ENCODE measurements at regions of chr3 and their contacts with region 1.

Region 1: GRCh38 chr3:107619549-107619948 is 96.8 kb downstream of the BBX start:
- DNase-seq: no peak
- ATAC-seq: no peak
- H3K4me3 Mint-ChIP-seq: no peak overlapping the region
- H3K27ac Mint-ChIP-seq: peak overlapping the region; percentile 5
- H3K4me1 Mint-ChIP-seq: peaks cover 59% of the 10 kb centered on the region
- H3K27me3 Mint-ChIP-seq: no peaks in the 10 kb centered on the region

Region 2: DNA sequence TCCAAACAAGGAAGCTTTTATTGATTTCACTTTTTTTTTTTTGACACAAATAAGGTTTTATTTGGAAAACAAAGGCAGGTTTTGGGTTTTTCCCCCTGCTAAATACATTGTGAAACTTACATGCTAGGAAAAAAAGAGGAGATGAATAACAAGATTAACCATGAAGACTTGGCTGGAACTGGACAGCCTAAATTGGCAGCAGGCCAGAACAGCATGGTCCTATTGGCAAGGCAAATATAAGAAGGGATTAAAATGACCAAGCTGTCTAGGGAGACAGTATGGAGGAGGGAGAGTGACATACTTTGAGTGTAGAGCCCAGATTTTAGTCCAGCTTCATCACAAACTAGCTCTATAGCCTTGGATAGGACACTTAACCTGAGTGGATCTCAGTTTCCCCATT is 160.7 kb before region 1 on chr3:
- CTCF ChIA-PET with region 1: no interaction called
- POLR2A ChIA-PET with region 1: no interaction called
- intact Hi-C with region 1: no loop called
- DNase-seq: no peak
- ATAC-seq: no peak
- H3K4me3 Mint-ChIP-seq: no peak overlapping the region
- H3K27ac Mint-ChIP-seq: no peak overlapping the region
- H3K4me1 Mint-ChIP-seq: peaks cover 4% of the 10 kb centered on the region
- H3K27me3 Mint-ChIP-seq: no peaks in the 10 kb centered on the region

Region 3: DNA sequence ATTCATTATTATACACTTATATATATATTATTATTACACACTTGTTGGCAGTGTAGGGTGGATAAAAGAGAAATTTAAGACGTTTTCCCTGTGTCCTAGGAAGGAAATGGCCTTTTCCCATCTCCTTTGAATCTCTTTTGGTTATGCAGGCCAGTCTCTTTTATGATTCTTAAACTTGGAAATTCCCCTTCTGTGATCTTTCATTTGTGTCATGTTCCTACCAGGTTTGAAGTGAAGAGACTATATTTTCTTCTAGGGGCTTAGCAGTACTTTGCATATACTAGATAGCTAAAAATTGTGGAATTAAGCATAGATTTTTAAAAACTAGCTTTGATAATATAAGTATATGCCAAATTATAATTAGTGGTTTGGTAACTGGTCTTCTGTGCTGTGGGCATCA is 38.3 kb before region 1 on chr3:
- CTCF ChIA-PET with region 1: no interaction called
- POLR2A ChIA-PET with region 1: no interaction called
- intact Hi-C with region 1: loop called in 1 of 2 experiments (anchors 5 kb)
- DNase-seq: no peak
- ATAC-seq: no peak
- H3K4me3 Mint-ChIP-seq: no peak overlapping the region
- H3K27ac Mint-ChIP-seq: no peak overlapping the region
- H3K4me1 Mint-ChIP-seq: peaks cover 31% of the 10 kb centered on the region
- H3K27me3 Mint-ChIP-seq: no peaks in the 10 kb centered on the region

Region 4: GRCh38 chr3:107592073-107592472 is 27.5 kb before region 1 on chr3:
- CTCF ChIA-PET with region 1: no interaction called
- POLR2A ChIA-PET with region 1: no interaction called
- intact Hi-C with region 1: no loop called
- DNase-seq: no peak
- ATAC-seq: no peak
- H3K4me3 Mint-ChIP-seq: no peak overlapping the region
- H3K27ac Mint-ChIP-seq: no peak overlapping the region
- H3K4me1 Mint-ChIP-seq: peaks cover 40% of the 10 kb centered on the region
- H3K27me3 Mint-ChIP-seq: no peaks in the 10 kb centered on the region

Region 5: GRCh38 chr3:107670986-107671385 is 51.4 kb after region 1 on chr3:
- CTCF ChIA-PET with region 1: no interaction called
- POLR2A ChIA-PET with region 1: no interaction called
- intact Hi-C with region 1: no loop called
- DNase-seq: no peak
- ATAC-seq: no peak
- H3K4me3 Mint-ChIP-seq: no peak overlapping the region
- H3K27ac Mint-ChIP-seq: no peak overlapping the region
- H3K4me1 Mint-ChIP-seq: peaks cover 29% of the 10 kb centered on the region
- H3K27me3 Mint-ChIP-seq: no peaks in the 10 kb centered on the region

Region 6: DNA sequence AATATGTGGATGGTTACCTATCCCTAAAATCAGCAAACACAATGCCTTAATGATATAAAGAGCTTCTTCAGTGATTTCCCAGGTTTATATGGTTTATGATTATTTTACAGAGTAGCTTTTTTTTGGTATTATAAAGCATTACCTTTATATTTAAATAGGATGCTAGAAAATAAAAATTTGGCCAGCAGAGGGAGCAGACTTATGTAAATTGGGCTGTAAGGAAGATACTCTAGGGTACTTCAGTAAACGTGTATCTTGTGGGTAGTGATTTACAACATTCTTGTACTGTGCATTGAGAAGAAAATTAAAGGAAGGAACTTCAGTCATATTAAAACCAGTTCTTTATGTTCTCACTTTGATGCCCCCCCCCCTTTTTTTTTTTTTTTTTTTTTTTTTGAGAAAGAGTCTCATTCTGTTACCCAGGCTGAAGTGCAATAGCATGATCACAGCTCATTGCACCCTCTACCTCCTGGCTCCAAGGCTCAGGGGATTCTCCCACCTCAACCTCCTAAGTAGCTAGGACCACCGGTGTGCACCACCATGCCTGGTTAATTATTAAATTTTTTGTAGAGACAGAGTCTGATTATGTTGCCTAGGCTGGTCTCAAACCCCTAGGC is 71.1 kb after region 1 on chr3:
- CTCF ChIA-PET with region 1: interaction called, 10 read pairs
- POLR2A ChIA-PET with region 1: no interaction called
- intact Hi-C with region 1: no loop called
- DNase-seq: no peak
- ATAC-seq: peak; percentile 57
- H3K4me3 Mint-ChIP-seq: no peak overlapping the region
- H3K27ac Mint-ChIP-seq: no peak overlapping the region
- H3K4me1 Mint-ChIP-seq: peaks cover 13% of the 10 kb centered on the region
- H3K27me3 Mint-ChIP-seq: no peaks in the 10 kb centered on the region

Region 7: GRCh38 chr3:108736821-108737220 is 1117.3 kb after region 1 on chr3:
- CTCF ChIA-PET with region 1: no interaction called
- POLR2A ChIA-PET with region 1: no interaction called
- intact Hi-C with region 1: no loop called
- DNase-seq: no peak
- ATAC-seq: no peak
- H3K4me3 Mint-ChIP-seq: no peak overlapping the region
- H3K27ac Mint-ChIP-seq: no peak overlapping the region
- H3K4me1 Mint-ChIP-seq: no peaks in the 10 kb centered on the region
- H3K27me3 Mint-ChIP-seq: no peaks in the 10 kb centered on the region

Measured in activated CD4-positive, alpha-beta T cell treated with anti-CD3 and anti-CD28 coated beads for 36 hours (primary cell).